ENCODE measurements at regions of chr13 and their contacts with region 1.

Region 1: DNA sequence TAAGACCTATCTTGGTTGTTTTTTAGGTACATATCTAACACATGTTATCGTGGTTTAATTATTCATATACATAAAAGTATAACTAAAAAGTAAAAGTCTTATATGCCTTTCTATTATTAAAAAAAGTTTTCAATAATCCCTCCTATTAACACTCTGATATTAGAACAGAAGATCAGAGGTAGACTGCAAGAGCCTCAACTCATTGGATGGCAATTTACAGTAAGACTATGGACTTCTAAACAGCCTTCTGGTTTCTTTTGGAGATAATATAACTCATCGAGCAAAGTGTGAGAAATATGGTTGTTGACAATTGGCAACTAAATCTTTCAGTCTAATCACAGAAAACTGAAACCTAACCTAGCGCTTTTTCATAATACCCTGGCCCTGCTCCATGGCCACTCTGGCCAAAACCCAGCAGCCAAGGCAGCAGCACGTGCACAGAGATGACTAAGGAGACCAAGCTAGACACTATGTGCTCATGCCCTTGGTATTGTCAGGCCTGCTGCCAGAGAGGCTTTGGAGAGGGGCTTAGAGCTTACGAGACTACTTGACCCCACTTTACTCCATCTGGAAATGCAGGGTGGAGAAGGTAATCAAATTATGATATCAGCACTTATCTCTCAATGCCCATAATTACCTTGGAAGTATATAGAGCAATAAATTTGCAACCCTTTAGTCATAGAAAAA is 40.6 kb upstream of the EEF1AKMT1 start:
- DNase-seq: peak; percentile 98
- H3K4me3 ChIP-seq: peak overlapping the region in 1 of 3 experiments; percentile 30
- H3K27ac ChIP-seq: peak overlapping the region; percentile 99
- H3K4me1 ChIP-seq: peaks cover 44% of the 10 kb centered on the region
- H3K27me3 ChIP-seq: no peaks in the 10 kb centered on the region
- CTCF ChIP-seq: no peak
- POLR2A ChIP-seq: no peak

Region 2: DNA sequence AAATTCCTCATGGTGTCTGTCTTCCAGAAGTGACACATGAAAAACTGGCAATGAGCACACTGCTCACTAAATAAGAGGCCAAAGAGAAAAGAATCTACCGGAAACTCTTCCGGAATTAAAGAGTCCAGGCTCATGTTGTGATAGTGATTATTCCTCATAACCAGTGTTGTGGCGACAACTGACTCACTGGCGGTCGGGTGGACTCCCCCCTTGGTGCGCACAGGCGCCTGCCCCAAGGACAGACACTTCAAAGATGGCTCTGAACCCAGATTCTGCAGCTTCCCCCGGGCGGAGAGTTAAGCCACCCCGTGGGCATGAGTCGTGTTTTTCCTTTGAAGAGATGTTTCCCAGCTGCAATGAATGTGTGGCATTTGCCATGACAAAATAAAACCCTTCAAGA is 100.6 kb before region 1 on chr13:
- CTCF ChIA-PET with region 1: interaction called, 17 read pairs
- POLR2A ChIA-PET with region 1: interaction called, 6 read pairs
- dilution Hi-C with region 1: no loop called
- intact Hi-C with region 1: loop called (anchors 2 kb)
- DNase-seq: peak; percentile 38
- H3K4me3 ChIP-seq: no peak overlapping the region
- H3K27ac ChIP-seq: peak overlapping the region; percentile 56
- H3K4me1 ChIP-seq: peaks cover 38% of the 10 kb centered on the region
- H3K27me3 ChIP-seq: no peaks in the 10 kb centered on the region
- CTCF ChIP-seq: no peak
- POLR2A ChIP-seq: no peak

Region 3: DNA sequence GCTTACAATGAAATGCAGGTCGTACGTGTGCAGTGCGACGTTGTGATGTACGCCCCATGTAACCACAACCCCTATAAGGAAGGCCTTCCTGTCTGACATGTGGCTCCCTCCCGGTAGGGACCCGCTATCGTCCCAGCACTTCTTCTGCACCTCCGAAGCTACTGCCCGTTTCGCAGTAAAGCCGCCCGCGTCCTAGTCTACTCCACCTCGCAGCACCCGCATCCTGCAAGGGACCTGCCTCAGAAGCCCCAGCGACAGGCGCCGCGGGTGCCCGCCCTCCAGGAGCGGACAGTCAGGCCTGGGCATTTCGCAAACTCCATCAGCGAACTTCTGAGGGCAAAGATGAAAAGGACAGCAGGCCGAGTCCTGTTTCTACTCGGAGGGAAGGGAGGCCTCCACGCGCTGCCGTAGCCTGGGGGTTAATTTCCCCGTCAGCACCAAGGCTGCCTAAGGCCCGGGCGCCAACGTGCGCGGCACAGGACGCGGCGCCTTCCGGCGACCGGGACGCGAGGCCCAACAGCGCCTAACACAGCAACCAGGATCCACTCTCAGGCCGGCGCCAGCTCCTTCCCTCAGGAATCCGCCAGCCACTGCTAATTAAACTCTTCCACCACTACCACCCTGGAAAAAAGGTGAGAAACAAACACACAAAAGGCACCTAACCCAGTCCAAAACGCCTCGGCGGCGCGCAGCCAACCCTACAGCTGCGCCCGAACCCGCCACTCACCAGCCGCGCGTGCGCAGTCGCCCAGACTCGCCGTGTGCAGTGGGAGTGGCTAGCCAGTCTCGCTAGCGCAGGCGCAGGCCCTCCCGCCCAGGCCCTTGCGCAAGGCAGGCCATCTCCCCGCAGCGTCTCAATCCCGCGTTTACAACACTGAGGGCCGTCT is 40.9 kb before region 1 on chr13 and contains the start of gene EEF1AKMT1:
- CTCF ChIA-PET with region 1: no interaction called
- POLR2A ChIA-PET with region 1: interaction called, 3 read pairs
- dilution Hi-C with region 1: no loop called
- intact Hi-C with region 1: loop called (anchors 1 kb)
- DNase-seq: peak; percentile 91
- H3K4me3 ChIP-seq: peak within 1 kb of the TSS; percentile 13 to 60 (median 35)
- H3K27ac ChIP-seq: peak within 1 kb of the TSS; percentile 88
- H3K4me1 ChIP-seq: peaks cover 18% of the 10 kb centered on the region
- H3K27me3 ChIP-seq: no peaks in the 10 kb centered on the region
- CTCF ChIP-seq: no peak
- POLR2A ChIP-seq: peak; percentile 56
- total RNA-seq, gene EEF1AKMT1: 8.7 and 11.1 TPM in 2 replicates

Region 4: DNA sequence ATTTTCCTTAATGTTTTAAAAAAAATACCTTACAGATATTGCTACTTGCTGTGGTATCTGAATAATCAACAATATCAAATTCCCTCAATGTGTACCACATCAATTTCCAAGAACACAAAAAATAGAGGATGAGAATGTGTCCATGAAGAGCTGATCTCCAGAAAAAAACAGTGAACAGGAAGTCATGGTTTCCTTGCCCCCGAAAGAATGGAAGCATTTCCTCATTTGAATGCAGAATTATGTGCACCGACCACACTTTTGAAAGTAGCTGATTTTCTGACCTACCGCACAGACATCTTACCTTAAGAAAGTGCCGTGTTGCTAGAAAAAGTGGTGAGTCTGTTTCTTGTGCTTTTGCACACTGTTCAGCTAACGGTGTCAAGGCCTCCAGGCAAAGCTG is 27.2 kb before region 1 on chr13:
- CTCF ChIA-PET with region 1: interaction called, 4 read pairs
- POLR2A ChIA-PET with region 1: no interaction called
- dilution Hi-C with region 1: no loop called
- intact Hi-C with region 1: loop called (anchors 1 kb)
- DNase-seq: no peak
- H3K4me3 ChIP-seq: no peak overlapping the region
- H3K27ac ChIP-seq: no peak overlapping the region
- H3K4me1 ChIP-seq: peaks cover 43% of the 10 kb centered on the region
- H3K27me3 ChIP-seq: no peaks in the 10 kb centered on the region
- CTCF ChIP-seq: no peak
- POLR2A ChIP-seq: no peak

Region 5: DNA sequence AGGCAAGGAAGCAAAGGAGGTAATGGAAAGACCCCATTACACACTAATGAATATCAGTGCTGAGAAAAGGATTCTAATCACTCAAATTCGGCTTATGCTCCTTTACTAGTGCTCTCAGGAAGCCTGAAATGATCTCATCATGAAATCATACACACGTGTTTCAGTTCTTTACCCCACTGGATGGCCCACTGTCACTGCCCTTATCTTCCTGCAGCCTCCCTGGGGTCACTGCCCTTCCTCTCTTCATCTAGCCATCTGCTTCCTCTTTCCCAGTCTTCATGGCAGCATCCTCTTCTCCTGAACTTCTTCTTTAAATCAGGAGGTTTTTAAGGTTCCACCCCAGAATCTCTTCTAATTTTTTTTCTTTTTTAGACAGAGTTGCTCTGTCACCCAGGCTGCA is 12.7 kb before region 1 on chr13:
- CTCF ChIA-PET with region 1: interaction called, 4 read pairs
- POLR2A ChIA-PET with region 1: no interaction called
- dilution Hi-C with region 1: no loop called
- intact Hi-C with region 1: loop called (anchors 1 kb)
- DNase-seq: peak; percentile 58
- H3K4me3 ChIP-seq: no peak overlapping the region
- H3K27ac ChIP-seq: peak overlapping the region; percentile 58
- H3K4me1 ChIP-seq: peaks cover 47% of the 10 kb centered on the region
- H3K27me3 ChIP-seq: no peaks in the 10 kb centered on the region
- CTCF ChIP-seq: no peak
- POLR2A ChIP-seq: no peak

Region 6: GRCh38 chr13:21075011-21075898 is 260.9 kb after region 1 on chr13:
- CTCF ChIA-PET with region 1: no interaction called
- POLR2A ChIA-PET with region 1: no interaction called
- dilution Hi-C with region 1: no loop called
- intact Hi-C with region 1: loop called (anchors 1 kb)
- DNase-seq: peak; percentile 59
- H3K4me3 ChIP-seq: peak overlapping the region in 2 of 3 experiments; percentile 51 to 52
- H3K27ac ChIP-seq: peak overlapping the region; percentile 95
- H3K4me1 ChIP-seq: peaks cover 31% of the 10 kb centered on the region
- H3K27me3 ChIP-seq: no peaks in the 10 kb centered on the region
- CTCF ChIP-seq: no peak
- POLR2A ChIP-seq: peak; percentile 76

Measured in endothelial cell of umbilical vein (primary cell).